Gastrocnemius medialis (tissue), 4 donors: ENCODE measurements at regions of chr7 and their contacts with region 1.

Region 1: GRCh38 chr7:28389504-28390395 is 22.6 kb upstream of the CREB5 start:
- DNase-seq: no peak
- ATAC-seq: peak; percentile 65 to 69
- H3K4me3 ChIP-seq: peak overlapping the region; percentile 42 to 61 (median 50)
- H3K27ac ChIP-seq: peak overlapping the region in 2 of 4 donors; percentile 46 to 47
- H3K4me1 ChIP-seq: peaks cover 6 to 8% of the 10 kb centered on the region in 2 donors
- H3K27me3 ChIP-seq: no peaks in the 10 kb centered on the region
- CTCF ChIP-seq: peak; percentile 71 to 89 (median 84)
- POLR2A ChIP-seq: no peak

Region 2: GRCh38 chr7:28433699-28434219 is 44.0 kb after region 1 on chr7:
- in situ Hi-C with region 1: no loop called
- intact Hi-C with region 1: no loop called
- DNase-seq: no peak
- ATAC-seq: no peak
- H3K4me3 ChIP-seq: no peak overlapping the region
- H3K27ac ChIP-seq: no peak overlapping the region
- H3K4me1 ChIP-seq: peaks cover 8 to 20% of the 10 kb centered on the region in 2 donors
- H3K27me3 ChIP-seq: no peaks in the 10 kb centered on the region
- CTCF ChIP-seq: no peak
- POLR2A ChIP-seq: no peak

Region 3: GRCh38 chr7:28520074-28521015 is 130.6 kb after region 1 on chr7:
- in situ Hi-C with region 1: no loop called
- intact Hi-C with region 1: loop called (anchors 5 kb)
- DNase-seq: peak in 1 of 2 donors; percentile 20
- ATAC-seq: peak; percentile 94 to 96
- H3K4me3 ChIP-seq: no peak overlapping the region
- H3K27ac ChIP-seq: peak overlapping the region in 2 of 4 donors; percentile 38 to 57
- H3K4me1 ChIP-seq: peaks cover 10 to 17% of the 10 kb centered on the region in 2 donors
- H3K27me3 ChIP-seq: no peaks in the 10 kb centered on the region
- CTCF ChIP-seq: no peak
- POLR2A ChIP-seq: no peak

Region 4: GRCh38 chr7:28608731-28609130 is 219.0 kb after region 1 on chr7:
- in situ Hi-C with region 1: loop called in 1 of 4 experiments (anchors 10 kb)
- intact Hi-C with region 1: no loop called
- DNase-seq: no peak
- ATAC-seq: no peak
- H3K4me3 ChIP-seq: no peak overlapping the region
- H3K27ac ChIP-seq: no peak overlapping the region
- H3K4me1 ChIP-seq: peaks cover 23 to 26% of the 10 kb centered on the region in 2 donors
- H3K27me3 ChIP-seq: no peaks in the 10 kb centered on the region
- CTCF ChIP-seq: no peak
- POLR2A ChIP-seq: no peak

Region 5: GRCh38 chr7:28853834-28854749 is 464.3 kb after region 1 on chr7:
- in situ Hi-C with region 1: loop called (anchors 5 kb)
- intact Hi-C with region 1: loop called (anchors 1 kb)
- DNase-seq: peak; percentile 39 to 72
- ATAC-seq: peak; percentile 96 to 98
- H3K4me3 ChIP-seq: peak overlapping the region; percentile 54 to 76 (median 64)
- H3K27ac ChIP-seq: peak overlapping the region in 1 of 4 donors; percentile 38
- H3K4me1 ChIP-seq: peaks cover 0 to 7% of the 10 kb centered on the region in 2 donors
- H3K27me3 ChIP-seq: peaks cover 0 to 5% (median 0%) of the 10 kb centered on the region in 3 donors
- CTCF ChIP-seq: peak; percentile 84 to 94 (median 90)
- POLR2A ChIP-seq: no peak